ENCODE measurements at regions of chrX and their contacts with region 1.

Region 1: GRCh38 chrX:120560842-120561633 is at the start of gene CUL4B:
- DNase-seq: peak; percentile 93
- ATAC-seq: peak; percentile 71
- H3K4me3 ChIP-seq: peak within 1 kb of the TSS; percentile 92
- H3K27ac ChIP-seq: peak within 1 kb of the TSS; percentile 97
- H3K4me1 ChIP-seq: peaks cover 27% of the 10 kb centered on the region
- H3K27me3 ChIP-seq: no peaks in the 10 kb centered on the region
- CTCF ChIP-seq: no peak
- total RNA-seq, gene CUL4B: 38.1 and 47.6 TPM in 2 replicates

Region 2: DNA sequence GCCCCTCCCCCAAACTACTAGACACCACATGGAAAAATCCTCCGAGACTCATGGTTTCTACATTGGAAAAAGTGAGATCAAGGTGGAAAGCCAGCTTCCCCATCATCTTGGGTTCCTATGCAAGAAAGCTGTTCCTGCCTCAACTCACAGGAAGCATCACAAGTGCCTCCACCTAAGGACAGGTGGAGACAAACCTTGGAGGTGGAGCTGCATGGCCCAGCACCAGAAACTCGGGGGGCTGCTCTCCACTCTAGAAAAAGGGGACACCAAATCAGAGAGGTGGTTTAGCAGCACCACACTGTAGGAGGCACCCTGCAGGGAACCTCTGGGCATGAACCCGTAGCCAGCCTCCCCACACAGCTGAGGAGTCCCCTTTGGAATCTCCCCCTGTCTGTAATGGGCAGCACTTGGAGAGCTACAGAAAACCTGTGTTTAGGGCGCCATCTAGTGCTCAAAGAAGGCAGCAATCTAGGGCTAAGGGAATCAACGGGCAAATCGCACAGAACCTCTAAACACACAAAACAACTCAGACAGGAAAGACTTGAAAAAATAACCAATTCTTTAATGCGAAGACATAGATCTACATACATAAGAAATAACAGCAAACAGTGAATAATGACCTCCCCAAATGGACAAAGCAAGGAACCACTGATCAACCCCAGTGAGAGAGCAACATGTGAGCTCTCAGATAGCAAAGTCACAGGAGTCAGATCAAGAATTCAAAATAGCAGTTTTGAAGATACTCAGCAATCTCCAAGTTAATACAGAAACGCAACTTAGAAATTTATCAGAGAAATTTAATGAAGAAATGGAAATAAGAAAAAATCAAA is 347.4 kb before region 1 on chrX:
- CTCF ChIA-PET with region 1: no interaction called
- POLR2A ChIA-PET with region 1: no interaction called
- intact Hi-C with region 1: no loop called
- DNase-seq: peak; percentile 77
- ATAC-seq: peak; percentile 86
- H3K4me3 ChIP-seq: no peak overlapping the region
- H3K27ac ChIP-seq: no peak overlapping the region
- H3K4me1 ChIP-seq: no peaks in the 10 kb centered on the region
- H3K27me3 ChIP-seq: no peaks in the 10 kb centered on the region
- CTCF ChIP-seq: peak; percentile 82

Region 3: DNA sequence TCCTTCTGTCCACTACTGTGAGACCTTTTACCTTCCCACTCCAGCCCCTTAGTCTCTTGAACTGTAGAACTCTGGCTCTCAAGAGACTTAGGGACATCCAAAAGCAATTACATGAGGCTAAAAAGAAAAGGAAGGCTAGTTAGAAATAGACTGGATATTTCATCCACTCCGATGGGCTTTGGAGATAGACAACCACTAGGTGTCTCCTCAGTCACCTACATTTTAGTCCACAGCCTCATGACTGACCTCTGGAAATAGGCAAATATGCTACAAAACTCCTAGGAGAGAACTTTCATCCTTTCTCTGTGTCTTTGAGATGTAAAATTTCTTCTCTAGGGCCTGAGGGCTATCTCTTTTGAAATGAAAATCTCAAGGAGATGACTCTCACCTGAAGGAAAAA is 46.8 kb before region 1 on chrX:
- CTCF ChIA-PET with region 1: no interaction called
- POLR2A ChIA-PET with region 1: interaction called, 8 read pairs
- intact Hi-C with region 1: loop called (anchors 5 kb)
- DNase-seq: peak; percentile 64
- ATAC-seq: peak; percentile 84
- H3K4me3 ChIP-seq: no peak overlapping the region
- H3K27ac ChIP-seq: no peak overlapping the region
- H3K4me1 ChIP-seq: peaks cover 17% of the 10 kb centered on the region
- H3K27me3 ChIP-seq: no peaks in the 10 kb centered on the region
- CTCF ChIP-seq: peak; percentile 76

Region 4: DNA sequence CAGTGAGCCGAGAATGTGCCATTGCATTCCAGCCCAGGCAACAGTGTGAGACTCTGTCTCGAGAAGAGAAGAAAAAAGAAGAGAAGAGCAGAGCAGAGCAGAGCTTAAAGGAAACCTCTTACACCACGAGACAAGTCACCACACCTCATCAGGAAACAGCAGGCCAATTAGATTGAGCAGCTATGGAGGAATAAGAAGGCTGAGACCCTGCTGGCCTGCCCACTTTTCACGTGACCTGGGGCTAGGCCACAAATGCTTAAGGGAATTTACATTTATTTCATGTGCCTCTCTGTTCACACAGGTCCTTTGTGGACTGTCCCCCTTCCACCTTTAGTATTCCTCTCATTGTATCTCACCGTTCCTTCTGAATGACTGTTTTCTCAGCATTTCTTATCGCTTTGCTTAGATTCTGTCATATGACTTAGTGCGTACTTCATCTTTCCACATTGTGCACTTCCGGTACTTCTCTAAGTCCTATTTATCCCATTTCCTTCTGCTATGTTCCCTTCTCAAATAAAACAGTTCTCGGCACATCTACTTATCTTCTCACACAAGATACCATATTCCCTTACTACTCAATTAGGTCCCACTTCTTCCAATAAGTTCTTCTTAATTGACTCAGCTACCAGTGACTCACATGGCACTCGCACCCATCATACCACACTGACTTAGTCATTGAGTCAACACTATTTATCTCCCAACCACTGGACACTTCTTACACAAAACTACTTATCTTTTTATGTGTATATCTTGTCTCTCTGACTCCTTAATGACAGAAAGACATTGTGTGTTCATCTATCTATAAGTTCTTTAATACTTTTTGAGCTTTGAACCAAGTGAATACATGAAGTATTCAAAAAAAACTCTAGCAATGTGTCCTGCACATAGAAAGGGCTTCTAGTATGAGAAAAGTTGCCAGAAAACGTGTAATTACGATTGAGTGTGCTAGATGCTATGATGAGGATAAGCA is 11.3 kb before region 1 on chrX:
- CTCF ChIA-PET with region 1: no interaction called
- POLR2A ChIA-PET with region 1: interaction called, 5 read pairs
- intact Hi-C with region 1: loop called (anchors 1 kb)
- DNase-seq: peak; percentile 88
- ATAC-seq: peak; percentile 94
- H3K4me3 ChIP-seq: peak overlapping the region; percentile 31; the same call in 1 of the 2 replicates
- H3K27ac ChIP-seq: peak overlapping the region; percentile 86
- H3K4me1 ChIP-seq: peaks cover 26% of the 10 kb centered on the region
- H3K27me3 ChIP-seq: no peaks in the 10 kb centered on the region
- CTCF ChIP-seq: no peak

Region 5: GRCh38 chrX:120603707-120604360 is 42.8 kb after region 1 on chrX and contains the start of gene MCTS1:
- CTCF ChIA-PET with region 1: no interaction called
- POLR2A ChIA-PET with region 1: interaction called, 36 read pairs
- intact Hi-C with region 1: loop called (anchors 1 kb)
- DNase-seq: peak; percentile 96
- ATAC-seq: peak; percentile 98
- H3K4me3 ChIP-seq: peak within 1 kb of the TSS; percentile 90
- H3K27ac ChIP-seq: peak within 1 kb of the TSS; percentile 92
- H3K4me1 ChIP-seq: peaks cover 10% of the 10 kb centered on the region
- H3K27me3 ChIP-seq: no peaks in the 10 kb centered on the region
- CTCF ChIP-seq: no peak
- total RNA-seq, gene MCTS1: 50.0 and 83.7 TPM in 2 replicates

Region 6: DNA sequence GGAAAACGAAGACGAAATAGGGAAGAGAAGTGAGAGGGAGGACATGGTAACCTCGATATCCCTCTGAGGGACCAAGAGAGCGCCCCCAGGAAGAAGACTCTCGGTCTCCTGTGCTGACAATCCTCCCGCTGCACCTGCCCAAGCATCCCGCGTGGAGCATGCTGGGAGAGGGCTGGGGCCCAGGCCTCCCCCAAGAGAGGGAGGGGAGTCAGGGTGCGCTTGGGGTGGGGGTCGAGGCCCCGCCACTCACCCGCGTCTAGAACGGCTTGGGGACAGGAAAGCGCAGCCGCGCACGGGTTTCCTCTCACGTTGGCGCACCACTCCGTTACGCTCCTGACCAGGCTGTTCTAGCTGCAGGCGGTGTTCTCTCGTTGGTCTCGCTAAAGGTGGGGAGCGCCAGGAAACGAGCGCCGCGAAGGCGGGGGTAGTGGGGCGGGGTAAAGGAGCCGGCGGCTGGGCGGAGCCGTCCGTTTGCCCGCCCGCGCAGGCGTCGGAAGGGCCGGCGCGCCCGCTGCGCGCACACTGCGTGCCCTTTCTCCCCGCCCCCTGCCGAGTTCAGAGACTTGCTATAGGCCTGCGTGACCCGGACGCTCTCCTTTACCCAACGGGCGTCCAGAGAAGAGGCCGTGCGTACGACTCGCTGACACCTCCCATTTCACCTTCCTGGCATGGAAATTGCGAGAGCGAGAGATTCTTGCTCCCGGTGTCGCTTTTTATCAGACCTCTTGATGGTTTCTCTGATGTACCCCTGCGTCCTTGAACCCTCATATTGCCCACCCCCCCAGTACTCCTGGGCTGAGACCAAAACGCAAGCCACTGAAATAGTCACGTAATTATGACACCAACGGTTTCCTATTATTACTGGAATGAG is 68.9 kb after region 1 on chrX and contains the start of gene C1GALT1C1:
- CTCF ChIA-PET with region 1: no interaction called
- POLR2A ChIA-PET with region 1: no interaction called
- intact Hi-C with region 1: loop called (anchors 1 kb)
- DNase-seq: peak; percentile 94
- ATAC-seq: peak; percentile 98
- H3K4me3 ChIP-seq: peak within 1 kb of the TSS; percentile 86
- H3K27ac ChIP-seq: peak within 1 kb of the TSS; percentile 47
- H3K4me1 ChIP-seq: peaks cover 12% of the 10 kb centered on the region
- H3K27me3 ChIP-seq: no peaks in the 10 kb centered on the region
- CTCF ChIP-seq: no peak; the same call in 1 of the 2 replicates
- total RNA-seq, gene C1GALT1C1: 33.3 and 37.2 TPM in 2 replicates

Region 7: GRCh38 chrX:120769576-120770341 is 208.7 kb after region 1 on chrX:
- CTCF ChIA-PET with region 1: no interaction called
- POLR2A ChIA-PET with region 1: no interaction called
- intact Hi-C with region 1: loop called (anchors 5 kb)
- DNase-seq: peak; percentile 82
- ATAC-seq: peak; percentile 67
- H3K4me3 ChIP-seq: no peak overlapping the region
- H3K27ac ChIP-seq: peak overlapping the region; percentile 86
- H3K4me1 ChIP-seq: peaks cover 28% of the 10 kb centered on the region
- H3K27me3 ChIP-seq: no peaks in the 10 kb centered on the region
- CTCF ChIP-seq: peak; percentile 70

Measured in PC-3 (cell line).